ENCODE measurements at regions of chr16 and their contacts with region 1.

Region 1: DNA sequence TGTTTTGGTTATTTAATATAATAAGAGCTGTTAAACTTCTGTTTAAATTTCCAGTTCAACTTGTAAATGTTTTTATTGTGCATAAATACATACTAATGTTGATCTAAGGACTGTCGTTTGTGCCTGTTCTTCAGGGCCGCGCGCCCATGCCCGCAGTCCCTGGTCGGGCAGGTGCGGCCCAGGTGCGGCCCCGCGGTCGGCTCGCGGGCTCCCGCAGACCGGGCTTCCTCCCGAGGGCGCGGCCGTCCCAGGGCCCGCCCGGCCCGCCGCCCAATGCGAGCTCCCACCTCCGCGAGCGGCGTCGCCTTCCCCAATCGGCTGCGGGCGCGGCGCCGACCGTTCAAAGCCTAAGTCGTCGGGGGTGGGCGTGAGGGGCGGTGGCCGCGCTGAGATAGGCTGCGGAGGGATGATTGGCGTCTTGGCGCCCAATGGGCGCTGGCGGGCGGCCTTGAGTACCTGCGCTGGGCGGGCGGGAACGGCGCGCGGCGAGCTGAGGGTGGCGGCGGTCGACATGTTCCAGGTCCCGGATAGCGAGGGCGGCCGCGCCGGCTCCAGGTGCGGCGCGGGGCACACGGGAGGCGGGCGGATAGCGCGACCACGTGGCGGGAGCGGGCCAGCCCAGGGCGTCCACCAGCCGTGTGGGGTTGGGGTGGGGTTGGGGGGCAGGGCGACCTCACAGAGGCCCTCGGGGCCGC is at the start of gene JPT2:
- DNase-seq: peak; percentile 98 to 99 (median 99)
- ATAC-seq: peak; percentile 98
- H3K4me3 ChIP-seq: peak within 1 kb of the TSS; percentile 84
- H3K27ac ChIP-seq: peak within 1 kb of the TSS; percentile 81
- H3K4me1 ChIP-seq: peaks cover 13 to 30% of the 10 kb centered on the region in 2 experiments; a peak in 4 of 5 replicates
- H3K27me3 ChIP-seq: no peaks in the 10 kb centered on the region
- CTCF ChIP-seq: 0 out of 6 replicates have a peak, but pooled peaks of 1 of the 3 experiments have one; percentile 1
- EP300 ChIP-seq: no peak
- POLR2A ChIP-seq: peak; percentile 65
- RAD21 ChIP-seq: no peak
- polyA plus RNA-seq, gene JPT2: 25.5 TPM

Region 2: GRCh38 chr16:1351582-1352362 is 326.2 kb before region 1 on chr16 and contains the starts of genes GNPTG and TSR3:
- CTCF ChIA-PET with region 1: no interaction called
- POLR2A ChIA-PET with region 1: no interaction called
- in situ Hi-C with region 1: no loop called
- intact Hi-C with region 1: no loop called
- DNase-seq: peak; percentile 89 to 94 (median 92)
- ATAC-seq: peak; percentile 90
- H3K4me3 ChIP-seq: peak within 1 kb of the TSS; percentile 99
- H3K27ac ChIP-seq: peak within 1 kb of the TSS; percentile 52; the same call in 2 of the 3 replicates
- H3K4me1 ChIP-seq: peaks cover 4 to 87% of the 10 kb centered on the region in 2 experiments; a peak in 3 of 5 replicates
- H3K27me3 ChIP-seq: no peaks in the 10 kb centered on the region
- CTCF ChIP-seq: no peak
- EP300 ChIP-seq: peak; percentile 41
- POLR2A ChIP-seq: peak; percentile 29; the same call in 1 of the 2 replicates
- RAD21 ChIP-seq: no peak
- polyA plus RNA-seq, gene GNPTG: 0.69 to 1.0 TPM
- polyA plus RNA-seq, gene TSR3: 1.5 to 2.4 TPM

Region 3: DNA sequence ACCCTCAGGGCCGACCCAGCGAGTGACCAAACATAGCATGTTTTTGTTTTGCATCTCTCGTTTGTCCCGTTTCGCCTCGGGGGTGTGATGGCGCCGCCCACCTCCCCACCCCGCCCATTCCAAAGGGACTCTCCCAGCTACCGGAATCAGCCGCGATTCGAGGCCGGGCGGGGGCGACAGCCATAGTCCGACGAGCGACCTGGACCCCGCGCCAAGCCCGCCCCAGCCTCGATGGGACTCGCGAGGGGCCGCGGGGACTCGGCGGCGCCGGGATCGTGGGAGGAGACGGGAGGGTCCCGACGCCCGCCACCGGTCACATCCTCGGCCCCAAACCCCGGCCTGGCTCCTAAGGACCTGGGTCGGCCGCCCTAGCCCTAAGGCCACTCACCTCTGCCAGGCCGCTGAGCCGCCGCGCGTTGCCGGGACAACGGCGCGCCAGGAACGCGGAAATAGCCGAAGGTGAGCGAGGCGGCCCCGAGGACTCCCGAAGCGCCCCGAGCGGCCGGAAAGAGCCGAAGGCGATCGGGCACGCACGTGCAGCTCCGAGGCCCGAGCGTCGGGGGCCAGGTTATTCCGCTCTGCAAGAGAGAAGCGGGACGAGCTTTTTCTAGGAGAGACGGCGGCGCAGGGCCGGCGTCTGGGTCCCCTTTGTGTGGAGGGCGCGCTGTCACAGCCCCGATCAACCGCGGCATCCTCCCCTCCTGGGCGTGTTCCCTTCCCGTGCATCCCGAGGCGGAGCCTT is 67.5 kb before region 1 on chr16:
- CTCF ChIA-PET with region 1: interaction called, 5 read pairs
- POLR2A ChIA-PET with region 1: interaction called, 11 read pairs
- in situ Hi-C with region 1: no loop called
- intact Hi-C with region 1: no loop called
- DNase-seq: peak; percentile 79 to 94 (median 84)
- ATAC-seq: peak; percentile 85
- H3K4me3 ChIP-seq: peak overlapping the region; percentile 72
- H3K27ac ChIP-seq: peak overlapping the region; percentile 88
- H3K4me1 ChIP-seq: peaks cover 13 to 43% of the 10 kb centered on the region in 2 experiments; a peak in 4 of 5 replicates
- H3K27me3 ChIP-seq: no peaks in the 10 kb centered on the region
- CTCF ChIP-seq: no peak
- EP300 ChIP-seq: no peak
- POLR2A ChIP-seq: peak; percentile 20; the same call in 1 of the 2 replicates
- RAD21 ChIP-seq: no peak; a peak in 1 of 4 replicates

Region 4: DNA sequence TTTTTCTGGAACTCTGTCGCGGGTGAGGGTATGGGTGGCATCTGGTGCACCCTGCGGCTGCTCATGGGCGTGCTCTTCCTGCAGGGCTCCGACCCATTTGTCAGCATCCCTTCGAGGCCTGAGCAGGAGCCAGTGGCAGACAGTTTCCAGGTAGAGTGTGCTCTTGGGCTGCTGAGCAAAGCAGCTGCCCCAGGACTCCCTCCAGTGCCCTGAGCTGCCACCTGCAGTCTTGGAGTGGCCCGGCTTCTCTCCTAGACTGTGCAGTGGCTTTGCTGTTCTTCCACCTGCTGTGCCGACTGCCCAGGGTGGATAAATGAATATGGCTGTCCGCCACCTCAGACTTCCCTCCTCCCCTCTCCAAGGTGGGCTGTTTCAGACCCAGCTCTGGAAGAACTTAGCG is 10.7 kb before region 1 on chr16:
- CTCF ChIA-PET with region 1: no interaction called
- POLR2A ChIA-PET with region 1: interaction called, 18 read pairs
- in situ Hi-C with region 1: no loop called
- intact Hi-C with region 1: no loop called
- DNase-seq: no peak
- ATAC-seq: no peak
- H3K4me3 ChIP-seq: no peak overlapping the region
- H3K27ac ChIP-seq: no peak overlapping the region
- H3K4me1 ChIP-seq: no peaks in the 10 kb centered on the region
- H3K27me3 ChIP-seq: no peaks in the 10 kb centered on the region
- CTCF ChIP-seq: peak in 1 of 3 experiments; percentile 5; a peak in 1 of 6 replicates
- EP300 ChIP-seq: no peak
- POLR2A ChIP-seq: no peak
- RAD21 ChIP-seq: no peak

Region 5: GRCh38 chr16:1705688-1706385 is 27.9 kb after region 1 on chr16 and contains the start of gene MAPK8IP3:
- CTCF ChIA-PET with region 1: no interaction called
- POLR2A ChIA-PET with region 1: interaction called, 21 read pairs
- in situ Hi-C with region 1: no loop called
- intact Hi-C with region 1: no loop called
- DNase-seq: peak; percentile 94 to 97 (median 96)
- ATAC-seq: peak; percentile 84
- H3K4me3 ChIP-seq: peak within 1 kb of the TSS; percentile 74
- H3K27ac ChIP-seq: peak within 1 kb of the TSS; percentile 84
- H3K4me1 ChIP-seq: peaks cover 28 to 46% of the 10 kb centered on the region in 2 experiments
- H3K27me3 ChIP-seq: no peaks in the 10 kb centered on the region
- CTCF ChIP-seq: peak; percentile 74 to 95 (median 93)
- EP300 ChIP-seq: no peak
- POLR2A ChIP-seq: peak; percentile 94
- RAD21 ChIP-seq: no peak
- polyA plus RNA-seq, gene MAPK8IP3: 0.17 to 0.21 TPM

Region 6: DNA sequence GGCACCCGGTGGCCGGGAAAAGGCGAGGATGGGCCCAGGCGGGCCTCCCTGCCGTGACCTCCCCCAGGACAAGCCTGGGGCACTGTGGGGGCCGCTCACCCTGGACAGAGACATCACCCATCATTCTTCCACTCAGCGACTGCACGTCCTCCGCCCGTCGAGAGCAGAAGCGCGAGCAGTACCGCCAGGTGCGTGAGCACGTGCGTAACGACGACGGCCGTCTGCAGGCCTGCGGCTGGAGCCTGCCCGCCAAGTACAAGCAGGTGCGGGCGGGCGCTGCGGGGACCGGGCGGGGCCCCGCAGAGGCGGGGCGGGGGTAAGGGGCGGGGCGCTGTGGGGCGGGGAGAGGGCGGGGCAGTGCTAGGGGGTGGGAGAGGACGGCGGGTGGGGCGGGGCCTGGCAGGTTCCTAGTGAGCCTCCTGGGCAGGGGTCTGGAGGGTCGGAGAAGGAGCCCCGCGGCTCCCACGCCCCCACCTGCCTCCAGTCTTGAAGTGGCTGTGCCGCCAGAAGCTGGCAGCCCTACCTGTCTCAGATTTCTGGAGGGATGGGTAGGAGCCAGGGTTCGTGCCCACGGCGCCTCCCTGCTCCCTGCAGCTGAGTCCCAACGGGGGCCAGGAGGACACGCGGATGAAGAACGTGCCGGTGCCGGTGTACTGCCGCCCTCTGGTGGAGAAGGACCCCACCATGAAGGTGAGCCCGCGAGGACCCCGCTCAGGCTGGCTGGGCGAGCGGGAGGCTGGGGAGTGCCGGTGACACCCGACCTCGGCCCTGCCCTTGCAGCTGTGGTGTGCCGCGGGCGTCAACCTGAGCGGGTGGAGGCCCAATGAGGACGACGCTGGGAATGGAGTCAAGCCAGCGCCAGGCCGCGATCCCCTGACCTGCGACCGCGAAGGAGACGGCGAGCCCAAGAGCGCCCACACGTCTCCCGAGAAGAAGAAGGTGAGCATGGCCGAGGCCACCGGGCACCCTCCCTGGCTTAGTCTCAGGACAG is 85.9 kb after region 1 on chr16:
- CTCF ChIA-PET with region 1: no interaction called
- POLR2A ChIA-PET with region 1: no interaction called
- in situ Hi-C with region 1: no loop called
- intact Hi-C with region 1: no loop called
- DNase-seq: peak; percentile 69 to 98 (median 96)
- ATAC-seq: peak; percentile 91
- H3K4me3 ChIP-seq: no peak overlapping the region
- H3K27ac ChIP-seq: peak overlapping the region; percentile 35; the same call in 1 of the 3 replicates
- H3K4me1 ChIP-seq: peaks cover 9 to 85% of the 10 kb centered on the region in 2 experiments; a peak in 4 of 5 replicates
- H3K27me3 ChIP-seq: no peaks in the 10 kb centered on the region
- CTCF ChIP-seq: peak; percentile 35 to 55 (median 43); a peak in 4 of 6 replicates
- EP300 ChIP-seq: no peak
- POLR2A ChIP-seq: no peak
- RAD21 ChIP-seq: peak in 1 of 2 experiments; percentile 45; a peak in 2 of 4 replicates

Measured in K562 (cell line).